Ovary (tissue), 10 donors: ENCODE measurements at regions of chr3 and their contacts with region 1.

Region 1: GRCh38 chr3:134600685-134601463 is 49.9 kb downstream of the KY start:
- DNase-seq: peak; percentile 39 to 80 (median 73)
- H3K4me3 ChIP-seq: peak overlapping the region; percentile 15
- H3K27ac ChIP-seq: no peak overlapping the region
- H3K4me1 ChIP-seq: no peaks in the 10 kb centered on the region
- H3K27me3 ChIP-seq: no peaks in the 10 kb centered on the region
- CTCF ChIP-seq: peak; percentile 58 to 86 (median 65)
- EP300 ChIP-seq: no peak
- POLR2A ChIP-seq: no peak

Region 2: GRCh38 chr3:134754768-134755559 is 154.1 kb after region 1 on chr3:
- intact Hi-C with region 1: loop called in 1 of 4 experiments (anchors 10 kb)
- DNase-seq: no peak
- H3K4me3 ChIP-seq: no peak overlapping the region
- H3K27ac ChIP-seq: no peak overlapping the region
- H3K4me1 ChIP-seq: no peaks in the 10 kb centered on the region
- H3K27me3 ChIP-seq: no peaks in the 10 kb centered on the region
- CTCF ChIP-seq: no peak
- EP300 ChIP-seq: no peak
- POLR2A ChIP-seq: no peak

Region 3: DNA sequence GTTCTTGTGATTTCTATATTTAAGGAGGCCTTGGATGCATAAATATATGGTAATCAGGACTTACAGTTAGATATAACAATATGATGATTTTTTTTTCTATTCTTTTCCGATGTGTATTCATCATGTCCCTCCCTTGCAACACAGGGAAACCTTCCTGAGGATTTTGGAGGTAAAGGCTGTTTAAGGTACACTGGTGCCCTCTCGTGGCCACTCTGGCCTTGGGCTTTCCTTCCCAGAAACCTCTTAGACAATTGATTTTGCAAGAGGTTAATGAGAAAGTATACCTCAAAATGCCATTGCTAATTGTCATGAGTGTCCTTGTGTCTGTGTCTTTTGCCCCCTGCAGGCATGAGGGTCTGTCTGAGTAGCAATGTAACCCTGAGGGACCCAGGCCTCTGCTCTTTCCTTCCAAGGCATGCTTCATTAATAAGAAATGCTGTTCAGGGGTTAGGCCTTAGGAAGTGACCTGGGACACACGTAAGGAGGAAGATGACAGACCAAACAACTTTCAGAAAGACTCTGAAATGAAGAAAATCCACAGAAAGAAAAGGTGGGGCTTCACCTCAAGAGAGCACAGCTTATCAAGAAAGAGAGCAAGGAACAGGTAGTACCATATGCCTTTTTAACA is 1294.3 kb after region 1 on chr3:
- intact Hi-C with region 1: loop called (anchors 5 to 10 kb)
- DNase-seq: peak; percentile 48 to 83 (median 70)
- H3K4me3 ChIP-seq: no peak overlapping the region
- H3K27ac ChIP-seq: no peak overlapping the region
- H3K4me1 ChIP-seq: no peaks in the 10 kb centered on the region
- H3K27me3 ChIP-seq: no peaks in the 10 kb centered on the region
- CTCF ChIP-seq: peak in 1 of 3 donors; percentile 47
- EP300 ChIP-seq: no peak
- POLR2A ChIP-seq: no peak